Esophagus muscularis mucosa (tissue), 4 donors: ENCODE measurements at regions of chr4 and their contacts with region 1.

Region 1: DNA sequence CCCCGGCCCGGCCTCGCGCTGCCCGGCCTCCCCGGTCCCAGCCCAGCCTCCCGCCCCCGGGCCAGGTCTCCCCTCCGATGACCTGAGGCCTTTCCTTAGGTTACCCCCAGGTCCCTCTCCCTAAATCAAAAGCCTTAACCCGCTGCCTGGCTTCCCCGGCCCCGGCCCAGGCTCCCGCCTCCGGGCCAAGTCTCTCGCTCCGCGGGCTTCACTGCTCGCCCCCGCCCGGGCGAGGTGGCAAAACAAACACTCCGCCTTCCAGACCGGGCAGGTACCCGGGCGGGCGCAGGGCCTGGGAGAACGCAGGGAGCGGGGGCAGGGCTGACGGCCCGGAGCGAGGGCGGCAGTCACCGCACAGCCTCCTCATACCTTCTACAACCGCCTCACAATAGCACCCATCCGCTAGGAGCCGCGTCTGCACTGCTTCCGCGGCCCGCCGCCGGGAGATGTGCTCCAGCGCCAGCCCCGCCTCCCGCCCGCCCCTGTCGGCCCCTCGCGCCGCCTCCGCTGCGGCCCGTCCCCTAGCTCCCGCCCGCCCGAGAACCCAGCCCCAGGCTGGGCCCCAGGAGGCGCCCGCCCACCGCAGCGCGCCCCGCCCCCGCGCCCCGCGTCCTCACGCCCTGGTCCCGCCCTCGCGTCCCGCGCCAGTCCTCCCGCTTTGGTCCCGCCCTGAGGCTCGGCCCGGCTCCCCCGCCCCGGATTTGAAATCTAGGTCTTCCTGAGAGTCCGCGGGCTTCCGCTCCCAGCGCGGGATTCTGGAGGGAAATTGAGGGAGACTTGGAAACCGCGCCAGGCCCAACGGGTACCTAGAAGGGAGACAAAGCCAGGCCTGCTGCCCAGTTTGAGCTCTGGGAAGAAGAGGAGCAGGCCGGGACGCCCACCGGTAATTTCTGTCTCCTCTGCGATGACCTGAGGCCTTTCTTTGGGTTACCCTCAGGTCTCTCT is at the starts of genes CASP3 and PRIMPOL:
- DNase-seq: peak; percentile 99
- H3K4me3 ChIP-seq: peak within 1 kb of the TSS; percentile 79 to 99 (median 88)
- H3K27ac ChIP-seq: peak within 1 kb of the TSS; percentile 96 to 100 (median 98)
- H3K4me1 ChIP-seq: peaks cover 42 to 52% (median 50%) of the 10 kb centered on the region in 4 donors
- H3K27me3 ChIP-seq: no peaks in the 10 kb centered on the region
- CTCF ChIP-seq: peak; percentile 14 to 42 (median 21)
- EP300 ChIP-seq: no peak
- POLR2A ChIP-seq: peak; percentile 72
- total RNA-seq, gene CASP3: 11.3 to 18.6 (median 15.9) TPM
- total RNA-seq, gene PRIMPOL: 13.4 to 22.8 (median 16.6) TPM

Region 2: DNA sequence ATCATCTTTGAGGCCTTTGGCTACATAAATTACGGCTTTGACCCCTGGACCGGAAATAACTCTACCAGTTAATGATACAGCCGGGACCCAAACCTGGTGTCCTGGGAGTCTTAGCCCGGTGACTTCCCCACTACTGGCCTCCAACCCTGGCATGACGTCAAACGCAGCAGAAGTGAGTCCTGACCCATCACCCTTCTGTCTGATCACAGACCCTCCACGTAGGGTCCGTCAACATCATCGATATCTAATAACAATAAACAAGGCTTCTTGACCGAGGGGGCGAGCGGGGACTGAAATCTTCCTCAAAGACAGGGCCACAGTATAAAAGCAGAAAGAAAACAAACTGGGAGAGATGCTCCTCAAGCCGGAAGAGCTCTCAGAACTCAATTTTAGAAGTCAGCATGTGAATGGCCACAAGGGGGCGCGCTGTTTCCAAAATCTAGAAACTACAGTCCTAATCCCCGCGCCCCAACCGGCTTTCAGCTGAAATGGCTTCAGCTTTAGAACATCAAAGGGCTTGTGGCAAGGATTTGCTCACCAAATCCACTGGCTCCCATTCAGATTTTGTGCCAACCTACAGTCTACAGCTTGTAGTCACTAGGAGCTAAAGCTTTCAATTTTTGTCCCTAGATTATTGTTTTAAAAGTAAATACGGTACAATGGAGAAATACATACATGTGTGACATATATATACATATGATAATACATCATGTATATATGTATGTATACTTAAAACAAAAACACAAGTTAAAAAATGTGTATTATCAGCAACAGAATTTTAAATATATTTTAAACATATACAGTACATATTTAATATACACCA is 385.2 kb before region 1 on chr4:
- intact Hi-C with region 1: loop called (anchors 5 kb)
- DNase-seq: peak; percentile 98
- H3K4me3 ChIP-seq: peak overlapping the region in 1 of 4 donors; percentile 14
- H3K27ac ChIP-seq: no peak overlapping the region
- H3K4me1 ChIP-seq: peaks cover 0 to 7% (median 4%) of the 10 kb centered on the region in 4 donors
- H3K27me3 ChIP-seq: no peaks in the 10 kb centered on the region
- CTCF ChIP-seq: peak; percentile 85 to 91 (median 91)
- EP300 ChIP-seq: no peak
- POLR2A ChIP-seq: no peak

Region 3: GRCh38 chr4:184474263-184475095 is 174.8 kb before region 1 on chr4 and contains the start of gene IRF2:
- intact Hi-C with region 1: loop called (anchors 10 kb)
- DNase-seq: peak; percentile 99
- H3K4me3 ChIP-seq: peak within 1 kb of the TSS; percentile 68 to 93 (median 84)
- H3K27ac ChIP-seq: peak within 1 kb of the TSS; percentile 92 to 98 (median 95)
- H3K4me1 ChIP-seq: peaks cover 44 to 64% (median 55%) of the 10 kb centered on the region in 4 donors
- H3K27me3 ChIP-seq: no peaks in the 10 kb centered on the region
- CTCF ChIP-seq: peak in 2 of 3 experiments; percentile 16 to 30
- EP300 ChIP-seq: peak; percentile 70
- POLR2A ChIP-seq: peak; percentile 96
- total RNA-seq, gene IRF2: 32.3 to 50.1 (median 36.4) TPM

Region 4: GRCh38 chr4:184733654-184734524 is 84.6 kb after region 1 on chr4 and contains the start of gene CENPU:
- intact Hi-C with region 1: loop called (anchors 5 kb)
- DNase-seq: peak; percentile 97
- H3K4me3 ChIP-seq: peak within 1 kb of the TSS; percentile 73 to 87 (median 80)
- H3K27ac ChIP-seq: peak within 1 kb of the TSS; percentile 61 to 73 (median 69)
- H3K4me1 ChIP-seq: peaks cover 11 to 19% (median 18%) of the 10 kb centered on the region in 4 donors
- H3K27me3 ChIP-seq: peaks cover 0 to 4% (median 0%) of the 10 kb centered on the region in 4 donors
- CTCF ChIP-seq: peak in 1 of 3 experiments; percentile 41
- EP300 ChIP-seq: no peak
- POLR2A ChIP-seq: peak; percentile 70
- total RNA-seq, gene CENPU: 0.34 to 1.3 (median 0.74) TPM

Region 5: DNA sequence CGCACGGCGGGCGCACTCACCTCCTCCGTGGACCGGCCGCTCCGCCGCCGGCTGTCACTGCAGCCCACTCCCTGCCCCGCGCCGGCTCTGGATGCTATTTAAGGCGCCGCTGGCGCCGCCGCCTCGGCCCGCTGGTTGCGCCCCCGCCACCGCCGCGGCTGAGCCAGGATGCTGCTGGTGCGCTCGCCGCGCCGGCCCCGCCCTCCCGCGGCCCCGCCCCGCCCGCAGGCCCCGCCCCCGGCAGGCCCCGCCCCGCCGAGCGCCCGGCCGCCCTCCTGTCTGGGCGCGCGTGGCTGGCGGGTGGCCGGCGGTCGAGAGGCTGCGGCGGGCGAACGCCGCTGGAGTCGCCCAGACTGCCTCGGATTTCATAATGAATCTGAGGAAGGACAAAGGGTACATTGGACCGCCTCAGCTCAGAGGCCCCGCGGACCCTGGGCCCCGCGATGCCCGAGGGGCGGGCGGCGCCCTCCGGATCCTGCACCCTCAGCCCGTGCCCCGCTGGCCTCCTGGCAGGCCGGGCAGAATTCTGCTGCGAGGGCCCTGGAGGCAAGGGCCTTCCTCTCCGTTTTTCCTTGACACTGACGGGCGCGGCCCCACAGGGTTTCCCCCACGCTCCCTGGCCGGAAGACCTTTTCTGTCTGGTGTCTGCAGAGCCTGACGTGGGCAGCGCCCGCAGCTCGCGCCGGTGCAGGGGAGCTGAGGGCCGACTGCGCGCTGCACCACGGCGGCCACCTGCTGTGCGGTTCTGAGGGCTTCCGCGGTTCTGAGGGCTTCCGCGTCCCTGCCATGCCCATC is 176.8 kb after region 1 on chr4 and contains the start of gene ACSL1:
- intact Hi-C with region 1: loop called (anchors 10 kb)
- DNase-seq: no peak
- H3K4me3 ChIP-seq: peak within 1 kb of the TSS; percentile 74 to 91 (median 84)
- H3K27ac ChIP-seq: peak within 1 kb of the TSS; percentile 78 to 93 (median 88)
- H3K4me1 ChIP-seq: peaks cover 22 to 29% (median 27%) of the 10 kb centered on the region in 4 donors
- H3K27me3 ChIP-seq: no peaks in the 10 kb centered on the region
- CTCF ChIP-seq: peak in 2 of 3 experiments; percentile 19
- EP300 ChIP-seq: no peak
- POLR2A ChIP-seq: peak; percentile 22
- total RNA-seq, gene ACSL1: 43.5 to 136 (median 52.0) TPM

Region 6: GRCh38 chr4:185235843-185236503 is 586.7 kb after region 1 on chr4:
- intact Hi-C with region 1: no loop called
- DNase-seq: no peak
- H3K4me3 ChIP-seq: no peak overlapping the region
- H3K27ac ChIP-seq: no peak overlapping the region
- H3K4me1 ChIP-seq: peaks cover 6 to 20% (median 15%) of the 10 kb centered on the region in 4 donors
- H3K27me3 ChIP-seq: no peaks in the 10 kb centered on the region
- CTCF ChIP-seq: no peak
- EP300 ChIP-seq: no peak
- POLR2A ChIP-seq: no peak